T-cell (primary cell): ENCODE measurements at regions of chr15 and their contacts with region 1.

Region 1: DNA sequence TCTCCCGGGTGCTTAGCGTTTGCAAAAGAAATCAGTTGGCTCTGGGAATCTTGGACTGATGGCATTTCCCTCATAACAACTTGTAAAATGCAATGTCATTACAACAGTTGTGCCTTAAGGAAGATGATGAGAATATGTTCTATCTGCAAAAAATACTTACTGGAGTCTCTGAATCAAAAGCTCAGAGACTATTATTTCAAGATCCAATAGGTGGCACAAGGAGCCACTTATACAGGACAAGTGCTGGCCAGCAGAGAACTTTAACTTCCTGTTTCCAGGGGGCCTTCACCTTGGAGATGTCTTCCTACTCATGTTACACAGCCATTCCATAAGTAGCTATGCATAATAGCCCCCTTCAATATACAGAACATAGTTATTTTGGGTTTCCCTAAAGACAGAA is 8.9 kb upstream of the RPS27L start:
- DNase-seq: peak in 1 of 35 experiments; percentile 37
- ATAC-seq: peak in 2 of 4 experiments; percentile 34 to 37
- H3K4me3 ChIP-seq: no peak overlapping the region
- H3K4me3 Mint-ChIP-seq: no peak overlapping the region
- H3K27ac ChIP-seq: no peak overlapping the region
- H3K27ac Mint-ChIP-seq: no peak overlapping the region
- H3K4me1 ChIP-seq: no peaks in the 10 kb centered on the region
- H3K4me1 Mint-ChIP-seq: peaks cover 0 to 6% (median 2%) of the 10 kb centered on the region in 3 donors
- H3K27me3 ChIP-seq: no peaks in the 10 kb centered on the region
- H3K27me3 Mint-ChIP-seq: no peaks in the 10 kb centered on the region

Region 2: DNA sequence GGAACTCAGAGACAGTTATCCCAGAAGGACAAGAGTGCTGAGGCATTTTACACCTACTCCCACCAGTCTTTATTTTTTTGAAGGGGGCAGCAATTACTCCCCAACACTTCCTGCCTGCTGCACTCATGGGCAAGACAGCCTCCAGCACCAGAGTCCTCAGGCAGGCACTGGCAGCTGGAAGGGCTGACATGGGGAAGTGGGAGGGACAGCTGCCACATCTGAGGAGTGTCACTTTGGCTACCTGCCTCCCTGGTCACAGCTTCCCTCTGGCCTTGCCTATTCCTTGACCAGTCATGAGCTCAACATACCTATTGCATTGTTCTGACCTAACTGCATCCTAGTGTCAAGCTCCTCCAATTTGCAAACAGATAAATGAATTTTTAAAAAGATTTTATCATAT is 54.7 kb before region 1 on chr15:
- CTCF ChIA-PET with region 1: no interaction called
- POLR2A ChIA-PET with region 1: no interaction called
- DNase-seq: no peak
- ATAC-seq: no peak
- H3K4me3 ChIP-seq: no peak overlapping the region
- H3K4me3 Mint-ChIP-seq: no peak overlapping the region
- H3K27ac ChIP-seq: no peak overlapping the region
- H3K27ac Mint-ChIP-seq: no peak overlapping the region
- H3K4me1 ChIP-seq: no peaks in the 10 kb centered on the region
- H3K4me1 Mint-ChIP-seq: no peaks in the 10 kb centered on the region
- H3K27me3 ChIP-seq: peaks cover 0 to 8% of the 10 kb centered on the region in 2 experiments
- H3K27me3 Mint-ChIP-seq: peaks cover 3 to 10% of the 10 kb centered on the region in 2 donors

Region 3: DNA sequence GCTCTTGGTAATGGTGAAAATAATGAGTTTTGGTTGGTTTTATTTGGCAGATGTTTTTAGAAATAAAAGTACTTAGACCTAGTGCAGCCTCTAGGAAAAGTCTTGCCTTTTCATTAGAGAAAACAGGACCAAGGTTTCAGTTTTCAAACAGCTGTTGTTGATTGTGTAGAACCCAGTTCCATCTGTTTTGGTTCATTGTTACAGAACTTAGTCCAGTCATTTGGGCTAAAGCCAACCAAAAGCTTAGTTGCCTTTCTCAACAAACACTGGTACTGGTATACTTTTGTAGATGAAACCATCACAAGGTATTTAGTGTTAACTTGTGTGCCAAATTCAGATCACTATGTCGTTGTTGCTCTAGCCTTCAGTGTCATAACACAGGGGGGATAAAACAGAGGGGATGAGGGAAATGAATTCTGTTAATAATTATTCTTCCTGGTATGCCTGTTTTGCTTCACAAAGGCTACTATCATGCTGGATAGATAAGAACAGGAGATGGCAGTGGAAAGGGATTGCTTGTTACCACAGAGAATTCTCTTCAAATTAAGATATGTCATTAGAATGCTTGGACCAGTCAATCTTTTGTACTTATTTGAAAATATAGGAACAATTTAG is 98.6 kb after region 1 on chr15:
- CTCF ChIA-PET with region 1: interaction called in 1 of 2 experiments, 5 read pairs
- POLR2A ChIA-PET with region 1: interaction called in 1 of 2 experiments, 12 read pairs
- DNase-seq: no peak
- ATAC-seq: no peak
- H3K4me3 ChIP-seq: no peak overlapping the region
- H3K4me3 Mint-ChIP-seq: no peak overlapping the region
- H3K27ac ChIP-seq: no peak overlapping the region
- H3K27ac Mint-ChIP-seq: peak overlapping the region in 1 of 2 donors; percentile 61
- H3K4me1 ChIP-seq: no peaks in the 10 kb centered on the region
- H3K4me1 Mint-ChIP-seq: peaks cover 0 to 5% (median 3%) of the 10 kb centered on the region in 3 donors
- H3K27me3 ChIP-seq: no peaks in the 10 kb centered on the region
- H3K27me3 Mint-ChIP-seq: no peaks in the 10 kb centered on the region